ENCODE measurements at regions of chr9 and their contacts with region 1.

Region 1: GRCh38 chr9:36426945-36427344 is 26.9 kb upstream of the RNF38 start:
- DNase-seq: no peak
- H3K4me3 ChIP-seq: no peak overlapping the region
- H3K27ac ChIP-seq: no peak overlapping the region
- H3K4me1 ChIP-seq: no peaks in the 10 kb centered on the region
- H3K27me3 ChIP-seq: no peaks in the 10 kb centered on the region
- CTCF ChIP-seq: no peak
- POLR2A ChIP-seq: no peak

Region 2: GRCh38 chr9:36444203-36444602 is 17.3 kb after region 1 on chr9:
- intact Hi-C with region 1: loop called (anchors 1 kb)
- DNase-seq: no peak
- H3K4me3 ChIP-seq: no peak overlapping the region
- H3K27ac ChIP-seq: no peak overlapping the region
- H3K4me1 ChIP-seq: no peaks in the 10 kb centered on the region
- H3K27me3 ChIP-seq: no peaks in the 10 kb centered on the region
- CTCF ChIP-seq: no peak
- POLR2A ChIP-seq: no peak

Measured in breast epithelium (tissue), 4 donors.